CD14-positive monocyte (primary cell): ENCODE measurements at regions of chr7 and their contacts with region 1.

Region 1: DNA sequence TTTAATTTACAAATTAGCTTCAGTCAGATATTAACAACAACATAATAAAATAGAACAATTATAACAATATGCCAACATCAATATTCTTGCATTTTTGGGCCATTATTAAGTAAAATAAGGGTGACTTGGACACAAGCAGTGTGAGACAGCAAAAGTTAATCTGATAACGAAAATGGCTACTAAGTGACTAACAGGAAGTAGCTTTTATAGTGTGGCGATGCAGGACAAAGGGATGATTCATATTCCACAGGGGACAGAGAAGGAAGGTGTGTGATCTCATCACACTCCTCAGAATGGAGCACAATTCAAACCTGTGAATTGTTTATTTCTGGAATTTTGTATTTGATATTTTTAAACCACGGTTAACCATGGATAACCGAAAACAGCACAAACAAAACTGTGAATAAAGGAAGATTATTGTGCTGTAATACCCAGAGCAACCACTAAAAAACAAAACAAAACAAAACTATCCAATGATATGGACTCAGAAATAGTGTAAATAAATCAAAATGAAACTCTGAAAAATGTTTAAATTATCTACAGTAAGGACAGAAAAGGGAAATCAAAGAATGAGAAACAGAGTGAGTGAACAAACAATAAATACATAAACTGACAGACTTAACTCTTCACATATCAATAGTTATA is 66.9 kb upstream of the TFEC start:
- DNase-seq: peak; percentile 50 to 83 (median 64)
- H3K4me3 ChIP-seq: no peak overlapping the region
- H3K4me3 Mint-ChIP-seq: peak overlapping the region in 1 of 2 donors; percentile 44
- H3K27ac ChIP-seq: no peak overlapping the region
- H3K27ac Mint-ChIP-seq: peak overlapping the region in 2 of 7 donors; percentile 16 to 19
- H3K4me1 ChIP-seq: peaks cover 5 to 10% of the 10 kb centered on the region in 2 donors
- H3K4me1 Mint-ChIP-seq: peaks cover 13% of the 10 kb centered on the region
- H3K27me3 ChIP-seq: no peaks in the 10 kb centered on the region
- H3K27me3 Mint-ChIP-seq: no peaks in the 10 kb centered on the region
- CTCF ChIP-seq: peak; percentile 48

Region 2: GRCh38 chr7:116030651-116031276 is 66.7 kb before region 1 on chr7 and contains the start of gene TFEC:
- intact Hi-C with region 1: loop called in 1 of 2 experiments (anchors 10 kb)
- DNase-seq: peak; percentile 49 to 93 (median 90)
- H3K4me3 ChIP-seq: peak within 1 kb of the TSS; percentile 74 to 99 (median 94)
- H3K4me3 Mint-ChIP-seq: peak within 1 kb of the TSS; percentile 79 to 95
- H3K27ac ChIP-seq: peak within 1 kb of the TSS; percentile 49 to 80
- H3K27ac Mint-ChIP-seq: peak within 1 kb of the TSS; percentile 87 to 94 (median 93)
- H3K4me1 ChIP-seq: peaks cover 24 to 42% of the 10 kb centered on the region in 2 donors
- H3K4me1 Mint-ChIP-seq: peaks cover 39% of the 10 kb centered on the region
- H3K27me3 ChIP-seq: no peaks in the 10 kb centered on the region
- H3K27me3 Mint-ChIP-seq: no peaks in the 10 kb centered on the region
- CTCF ChIP-seq: no peak
- polyA plus RNA-seq, gene TFEC: 13.3 to 55.9 (median 17.4) TPM

Region 3: GRCh38 chr7:116062666-116063065 is 34.8 kb before region 1 on chr7:
- intact Hi-C with region 1: no loop called
- DNase-seq: no peak
- H3K4me3 ChIP-seq: no peak overlapping the region
- H3K4me3 Mint-ChIP-seq: no peak overlapping the region
- H3K27ac ChIP-seq: no peak overlapping the region
- H3K27ac Mint-ChIP-seq: no peak overlapping the region
- H3K4me1 ChIP-seq: no peaks in the 10 kb centered on the region
- H3K4me1 Mint-ChIP-seq: no peaks in the 10 kb centered on the region
- H3K27me3 ChIP-seq: no peaks in the 10 kb centered on the region
- H3K27me3 Mint-ChIP-seq: peaks cover 0 to 1% (median 1%) of the 10 kb centered on the region in 3 donors
- CTCF ChIP-seq: no peak